BJ (cell line): ENCODE measurements at regions of chr14 and their contacts with region 1.

Region 1: DNA sequence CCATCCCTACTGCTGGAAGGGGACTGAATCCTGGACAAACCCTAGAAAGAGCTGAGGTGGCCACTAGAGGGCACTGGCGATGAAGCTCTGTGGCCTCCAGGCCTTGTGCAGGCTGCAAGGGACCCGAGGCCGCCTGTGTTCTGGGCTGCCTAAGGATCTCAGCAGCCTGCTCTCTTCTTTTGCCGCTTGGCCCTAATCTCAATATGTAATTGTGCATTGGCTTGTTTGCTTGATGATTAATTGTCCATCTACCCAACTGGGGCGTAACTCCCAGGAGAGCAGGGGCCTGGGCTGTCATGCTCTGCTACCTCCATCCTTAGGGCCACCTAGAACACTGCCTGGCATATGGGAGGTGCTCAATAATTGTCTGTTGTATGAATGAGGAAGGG is 73.8 kb downstream of the SYNE3 start:
- DNase-seq: no peak
- H3K4me3 ChIP-seq: no peak overlapping the region
- H3K27me3 ChIP-seq: no peaks in the 10 kb centered on the region
- CTCF ChIP-seq: peak; percentile 95

Region 2: DNA sequence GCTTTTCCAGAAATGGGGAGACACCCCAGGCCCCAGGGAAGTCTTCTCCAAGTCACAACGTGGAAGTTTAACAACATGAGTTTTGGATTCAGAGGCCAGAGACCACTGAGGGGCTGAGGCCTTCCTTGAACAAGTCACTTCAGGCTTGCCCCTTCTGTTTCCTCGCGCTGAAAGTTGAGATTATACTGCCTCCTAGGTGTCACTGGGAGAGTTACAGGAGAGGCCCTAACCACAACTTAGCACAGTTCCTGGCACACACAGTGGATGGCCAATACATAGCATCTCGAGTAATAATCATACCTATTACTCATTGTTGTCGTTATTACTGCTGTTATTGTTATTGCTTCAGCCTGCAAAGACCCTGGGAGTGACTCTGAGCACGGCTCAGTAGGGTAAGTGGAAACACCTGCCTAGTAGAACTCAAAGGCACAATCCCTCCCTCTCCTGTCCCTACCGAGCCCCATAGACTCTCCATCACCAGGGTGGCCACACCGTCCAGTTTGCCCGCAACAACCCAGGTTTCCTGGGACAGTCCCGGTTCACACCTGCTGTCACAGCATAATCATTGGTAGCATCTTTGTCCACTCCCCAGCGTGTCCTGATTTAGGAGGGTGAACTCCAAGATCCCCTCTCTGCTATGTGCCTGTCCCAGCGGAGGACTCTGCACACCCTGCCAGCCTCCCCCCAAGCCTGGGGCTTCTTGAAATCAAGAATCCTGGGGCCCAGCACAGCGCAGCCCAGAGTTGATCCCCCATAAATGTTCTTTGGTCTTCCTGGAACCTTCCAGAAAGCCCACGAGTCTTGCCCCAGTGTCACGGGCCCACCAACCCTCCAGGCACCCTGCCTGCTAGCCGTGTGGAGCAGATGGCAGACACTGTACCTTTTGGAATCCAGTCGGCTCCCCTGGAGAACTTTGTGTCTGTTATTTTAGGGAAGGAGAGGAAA is 11.2 kb before region 1 on chr14:
- CTCF ChIA-PET with region 1: interaction called, 18 read pairs
- POLR2A ChIA-PET with region 1: no interaction called
- DNase-seq: no peak
- H3K4me3 ChIP-seq: no peak overlapping the region
- H3K27me3 ChIP-seq: no peaks in the 10 kb centered on the region
- CTCF ChIP-seq: peak; percentile 40

Region 3: DNA sequence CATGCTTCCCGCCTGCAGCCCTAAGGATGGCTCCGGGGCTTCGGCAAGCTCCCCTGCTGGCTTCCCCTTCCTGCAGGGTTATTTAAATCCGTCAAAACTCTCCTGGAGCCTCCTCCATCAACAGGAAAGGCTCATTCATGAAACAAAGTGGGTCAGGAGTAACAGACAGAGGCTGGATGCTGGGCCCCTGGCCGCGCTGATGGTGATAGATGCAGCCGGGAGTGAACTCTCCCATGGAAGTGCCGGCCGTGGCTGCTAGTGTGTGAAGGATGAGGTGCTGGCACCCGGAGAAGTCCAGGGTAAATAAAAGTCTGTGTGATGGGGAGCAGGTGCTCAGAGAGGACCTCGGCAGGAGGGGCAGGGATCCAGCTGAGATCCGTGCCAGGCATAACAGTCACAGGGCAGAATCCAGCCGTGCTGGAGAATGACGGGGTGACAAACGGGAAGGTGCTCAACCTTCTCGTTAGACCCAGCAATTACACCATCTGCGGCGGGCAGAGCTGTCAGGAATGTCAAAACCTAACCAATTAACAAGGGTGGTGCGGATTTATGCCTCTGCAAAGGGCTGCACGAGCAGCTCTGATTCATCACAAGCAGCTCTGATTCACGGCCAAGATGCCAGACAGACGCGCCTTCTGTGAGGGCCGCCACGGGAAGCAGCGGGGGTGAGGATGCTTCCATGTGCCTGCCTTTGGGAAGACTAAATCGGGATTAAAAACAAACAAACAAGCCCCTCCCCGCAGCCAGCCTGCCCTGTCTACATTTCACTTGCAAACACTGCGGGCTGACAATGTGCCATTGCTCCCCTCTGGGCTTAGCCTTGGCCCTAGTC is 18.2 kb after region 1 on chr14:
- CTCF ChIA-PET with region 1: interaction called, 10 read pairs
- POLR2A ChIA-PET with region 1: no interaction called
- DNase-seq: no peak
- H3K4me3 ChIP-seq: no peak overlapping the region
- H3K27me3 ChIP-seq: no peaks in the 10 kb centered on the region
- CTCF ChIP-seq: no peak

Region 4: DNA sequence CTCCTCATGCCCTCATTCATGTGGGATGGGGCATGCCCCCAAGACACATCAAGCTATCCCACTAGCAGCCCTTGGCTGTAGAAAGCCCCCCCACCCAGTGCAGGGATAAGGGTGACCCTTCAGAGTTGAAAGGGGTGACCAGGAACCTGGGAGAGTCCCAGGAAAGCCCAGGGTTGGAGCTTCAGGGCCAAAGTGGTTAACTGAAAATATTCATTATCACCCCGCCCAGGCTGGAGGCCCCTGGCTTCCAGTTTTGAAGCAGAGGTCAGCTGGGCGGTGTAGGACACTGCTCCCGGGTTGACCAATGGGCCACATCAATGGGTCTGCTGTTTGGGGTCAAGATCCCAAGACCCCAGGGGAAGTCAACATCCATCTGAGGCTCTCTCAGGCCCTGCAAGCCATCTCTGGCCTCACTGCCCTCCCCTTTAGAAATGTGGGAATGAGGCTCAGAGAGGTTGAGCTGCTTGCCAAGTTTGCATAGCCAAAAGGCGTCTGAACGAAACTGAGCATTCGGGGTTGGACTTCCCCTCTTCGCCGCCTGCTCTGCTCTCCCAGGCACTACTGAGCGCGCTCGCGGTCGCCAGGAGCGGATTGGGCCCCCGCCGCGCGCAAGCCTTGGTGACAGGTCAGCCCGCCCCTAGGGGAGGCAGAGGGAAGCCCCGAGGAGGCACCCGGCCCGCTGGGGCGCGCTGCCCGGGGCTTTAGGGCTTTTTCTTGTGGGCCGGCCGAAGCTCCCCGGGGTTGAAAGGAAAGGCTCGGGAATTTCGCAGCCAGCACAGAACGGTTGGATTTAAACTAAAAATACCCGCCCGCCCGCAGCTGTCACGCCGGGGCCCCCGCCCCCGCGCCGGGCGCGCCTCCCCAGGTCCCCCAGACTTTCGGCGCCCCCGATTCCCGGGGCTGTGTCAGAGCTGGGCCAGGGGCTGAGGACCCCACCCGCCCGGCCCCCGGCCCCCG is 73.2 kb after region 1 on chr14:
- CTCF ChIA-PET with region 1: interaction called, 32 read pairs
- POLR2A ChIA-PET with region 1: no interaction called
- DNase-seq: no peak
- H3K4me3 ChIP-seq: peak overlapping the region; percentile 60
- H3K27me3 ChIP-seq: no peaks in the 10 kb centered on the region
- CTCF ChIP-seq: peak; percentile 56

Region 5: GRCh38 chr14:95534299-95535225 is 91.9 kb after region 1 on chr14 and contains the start of gene GLRX5:
- CTCF ChIA-PET with region 1: interaction called, 211 read pairs
- POLR2A ChIA-PET with region 1: no interaction called
- DNase-seq: peak; percentile 100
- H3K4me3 ChIP-seq: peak within 1 kb of the TSS; percentile 89
- H3K27me3 ChIP-seq: no peaks in the 10 kb centered on the region
- CTCF ChIP-seq: no peak
- polyA plus RNA-seq, gene GLRX5: 15.3 and 23.6 TPM in 2 replicates